ENCODE measurements at regions of chr4 and their contacts with region 1.

Region 1: GRCh38 chr4:48085821-48086607 is 48.0 kb downstream of the TXK start:
- DNase-seq: no peak
- ATAC-seq: no peak
- H3K4me3 ChIP-seq: no peak overlapping the region
- H3K27ac ChIP-seq: no peak overlapping the region
- H3K4me1 ChIP-seq: no peaks in the 10 kb centered on the region
- H3K27me3 ChIP-seq: no peaks in the 10 kb centered on the region
- CTCF ChIP-seq: no peak
- EP300 ChIP-seq: no peak
- POLR2A ChIP-seq: no peak
- RAD21 ChIP-seq: no peak

Region 2: DNA sequence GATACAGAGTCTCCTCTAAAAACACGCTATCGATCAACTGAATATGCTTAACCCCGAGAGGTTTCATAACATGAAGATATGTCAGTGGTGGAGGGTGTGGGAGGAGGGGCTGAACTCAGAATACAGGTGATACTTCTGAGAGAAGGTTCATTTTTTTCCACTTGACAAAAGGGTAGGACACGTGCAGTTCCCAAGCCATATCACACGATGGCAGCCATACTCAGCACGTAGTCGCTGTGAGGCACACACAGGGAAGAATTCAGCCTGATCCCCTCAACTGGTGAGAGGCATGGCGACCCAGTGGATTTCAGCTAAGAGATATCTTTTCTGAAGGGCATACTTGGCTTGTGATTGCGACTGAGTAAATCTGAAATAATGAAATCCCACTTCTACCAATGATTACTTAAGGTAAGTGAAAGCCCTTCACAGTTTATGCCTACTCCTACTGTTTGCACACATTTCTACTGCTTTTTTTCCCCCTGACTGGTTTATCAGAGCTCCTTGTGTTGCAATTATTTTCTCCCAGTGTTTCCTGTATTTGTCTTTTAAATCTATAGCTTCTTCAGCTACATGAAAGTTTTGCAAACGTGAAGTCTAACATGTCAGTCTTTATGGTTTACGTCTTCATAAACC is 381.2 kb before region 1 on chr4:
- CTCF ChIA-PET with region 1: interaction called, 3 read pairs
- POLR2A ChIA-PET with region 1: no interaction called
- in situ Hi-C with region 1: no loop called
- intact Hi-C with region 1: loop called (anchors 5 kb)
- DNase-seq: peak in 2 of 4 experiments; percentile 14 to 34
- ATAC-seq: peak; percentile 94
- H3K4me3 ChIP-seq: no peak overlapping the region
- H3K27ac ChIP-seq: no peak overlapping the region
- H3K4me1 ChIP-seq: no peaks in the 10 kb centered on the region
- H3K27me3 ChIP-seq: peaks cover 0 to 10% of the 10 kb centered on the region in 2 experiments; a peak in 2 of 5 replicates
- CTCF ChIP-seq: peak; percentile 43 to 52 (median 51)
- EP300 ChIP-seq: no peak
- POLR2A ChIP-seq: no peak
- RAD21 ChIP-seq: peak; percentile 29 to 61; a peak in 2 of 4 replicates

Region 3: GRCh38 chr4:47926639-47927258 is 159.3 kb before region 1 on chr4:
- CTCF ChIA-PET with region 1: no interaction called
- POLR2A ChIA-PET with region 1: no interaction called
- in situ Hi-C with region 1: no loop called
- intact Hi-C with region 1: loop called (anchors 5 kb)
- DNase-seq: peak; percentile 26 to 76 (median 48)
- ATAC-seq: peak; percentile 100
- H3K4me3 ChIP-seq: no peak overlapping the region
- H3K27ac ChIP-seq: no peak overlapping the region
- H3K4me1 ChIP-seq: no peaks in the 10 kb centered on the region; a peak in 1 of 5 replicates
- H3K27me3 ChIP-seq: no peaks in the 10 kb centered on the region; a peak in 3 of 5 replicates
- CTCF ChIP-seq: peak; percentile 73 to 82 (median 74)
- EP300 ChIP-seq: no peak
- POLR2A ChIP-seq: no peak
- RAD21 ChIP-seq: peak in 1 of 2 experiments; percentile 61; a peak in 3 of 4 replicates

Region 4: GRCh38 chr4:48002267-48002666 is 83.7 kb before region 1 on chr4:
- CTCF ChIA-PET with region 1: interaction called, 6 read pairs
- POLR2A ChIA-PET with region 1: no interaction called
- in situ Hi-C with region 1: no loop called
- intact Hi-C with region 1: loop called (anchors 2 kb)
- DNase-seq: no peak
- ATAC-seq: no peak
- H3K4me3 ChIP-seq: no peak overlapping the region
- H3K27ac ChIP-seq: no peak overlapping the region
- H3K4me1 ChIP-seq: no peaks in the 10 kb centered on the region
- H3K27me3 ChIP-seq: no peaks in the 10 kb centered on the region
- CTCF ChIP-seq: no peak
- EP300 ChIP-seq: no peak
- POLR2A ChIP-seq: no peak
- RAD21 ChIP-seq: no peak

Region 5: GRCh38 chr4:48016141-48017103 is 69.6 kb before region 1 on chr4 and contains the starts of genes CNGA1 and NIPAL1:
- CTCF ChIA-PET with region 1: no interaction called
- POLR2A ChIA-PET with region 1: interaction called, 4 read pairs
- in situ Hi-C with region 1: no loop called
- intact Hi-C with region 1: loop called (anchors 5 kb)
- DNase-seq: peak; percentile 81 to 95 (median 92)
- ATAC-seq: peak; percentile 98
- H3K4me3 ChIP-seq: peak within 1 kb of the TSS; percentile 54
- H3K27ac ChIP-seq: no peak within 1 kb of the TSS
- H3K4me1 ChIP-seq: peaks cover 4 to 13% of the 10 kb centered on the region in 2 experiments; a peak in 3 of 5 replicates
- H3K27me3 ChIP-seq: peaks cover 10 to 16% of the 10 kb centered on the region in 2 experiments; a peak in 4 of 5 replicates
- CTCF ChIP-seq: peak; percentile 61 to 89 (median 73)
- EP300 ChIP-seq: no peak
- POLR2A ChIP-seq: no peak
- RAD21 ChIP-seq: peak in 1 of 2 experiments; percentile 53; a peak in 2 of 4 replicates
- polyA plus RNA-seq, gene CNGA1: not detected
- polyA plus RNA-seq, gene NIPAL1: 0.03 to 0.17 TPM

Region 6: DNA sequence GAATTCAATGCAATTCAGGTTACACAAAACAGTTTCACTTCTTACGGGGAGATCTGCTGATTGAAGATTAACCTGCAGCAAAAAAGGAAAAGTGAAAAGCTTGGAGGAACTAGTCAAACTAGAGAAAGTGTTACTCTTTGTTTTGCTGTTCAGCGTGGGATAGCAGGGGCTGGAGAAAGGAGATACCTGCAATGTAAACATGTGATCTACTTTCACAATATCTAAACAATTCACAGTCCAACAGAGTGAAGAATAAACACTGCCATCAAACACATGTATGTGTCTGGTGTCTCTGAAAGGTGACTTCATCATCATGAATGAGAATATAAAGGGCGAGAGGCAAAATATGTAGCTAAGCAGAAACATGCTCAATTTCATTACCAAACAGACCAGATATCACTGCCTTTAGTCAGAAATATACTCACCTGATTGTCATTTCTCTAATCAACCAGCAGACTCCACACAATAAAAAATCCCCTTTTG is 43.0 kb before region 1 on chr4:
- CTCF ChIA-PET with region 1: no interaction called
- POLR2A ChIA-PET with region 1: no interaction called
- in situ Hi-C with region 1: no loop called
- intact Hi-C with region 1: loop called (anchors 5 kb)
- DNase-seq: no peak
- ATAC-seq: no peak
- H3K4me3 ChIP-seq: no peak overlapping the region
- H3K27ac ChIP-seq: no peak overlapping the region
- H3K4me1 ChIP-seq: no peaks in the 10 kb centered on the region
- H3K27me3 ChIP-seq: peaks cover 12 to 20% of the 10 kb centered on the region in 2 experiments; a peak in 4 of 5 replicates
- CTCF ChIP-seq: no peak
- EP300 ChIP-seq: no peak
- POLR2A ChIP-seq: no peak
- RAD21 ChIP-seq: no peak

Region 7: DNA sequence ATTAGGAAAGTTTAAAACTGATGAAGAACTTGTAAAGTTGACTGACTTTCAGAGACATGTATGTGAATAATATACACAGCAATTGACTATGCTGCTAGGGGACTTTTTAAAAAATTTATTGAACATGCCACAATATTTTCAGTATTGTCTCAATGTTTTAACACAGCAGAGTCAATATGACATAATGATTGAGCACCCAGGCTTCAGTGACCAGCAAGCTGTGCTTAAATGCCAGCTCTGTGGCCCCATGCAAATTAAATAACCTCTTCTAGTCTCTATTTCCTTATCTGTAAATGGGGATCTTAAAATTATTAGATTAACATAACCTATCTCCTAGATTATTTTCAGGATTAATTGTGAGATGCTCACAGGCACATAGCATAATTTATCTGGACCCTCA is 104.8 kb after region 1 on chr4:
- CTCF ChIA-PET with region 1: no interaction called
- POLR2A ChIA-PET with region 1: no interaction called
- in situ Hi-C with region 1: no loop called
- intact Hi-C with region 1: no loop called
- DNase-seq: no peak
- ATAC-seq: no peak
- H3K4me3 ChIP-seq: no peak overlapping the region
- H3K27ac ChIP-seq: 0 out of 3 replicates have a peak overlapping the region, but pooled peaks have one; percentile 10
- H3K4me1 ChIP-seq: peaks cover 21 to 33% of the 10 kb centered on the region in 2 experiments
- H3K27me3 ChIP-seq: no peaks in the 10 kb centered on the region
- CTCF ChIP-seq: no peak
- EP300 ChIP-seq: no peak
- POLR2A ChIP-seq: no peak
- RAD21 ChIP-seq: no peak

Region 8: GRCh38 chr4:48665555-48666186 is 579.7 kb after region 1 on chr4:
- CTCF ChIA-PET with region 1: no interaction called
- POLR2A ChIA-PET with region 1: no interaction called
- in situ Hi-C with region 1: no loop called
- intact Hi-C with region 1: no loop called
- DNase-seq: no peak
- ATAC-seq: no peak
- H3K4me3 ChIP-seq: no peak overlapping the region
- H3K27ac ChIP-seq: no peak overlapping the region
- H3K4me1 ChIP-seq: peaks cover 0 to 3% of the 10 kb centered on the region in 2 experiments; a peak in 2 of 5 replicates
- H3K27me3 ChIP-seq: no peaks in the 10 kb centered on the region
- CTCF ChIP-seq: no peak
- EP300 ChIP-seq: no peak
- POLR2A ChIP-seq: no peak
- RAD21 ChIP-seq: no peak

Measured in K562 (cell line).